Dendritic cell treated with granulocyte-macrophage colony-stimulating factor and Interleukin-4, amounts not matched to agents 40 ng/mL and 50 ng/mL, for 4 days (primary cell): ENCODE measurements at regions of chr10 and their contacts with region 1.

Region 1: GRCh38 chr10:119517235-119518141 is 25.0 kb downstream of the RGS10 start:
- H3K4me3 Mint-ChIP-seq: peak overlapping the region; percentile 52
- H3K27ac Mint-ChIP-seq: peak overlapping the region; percentile 77
- H3K4me1 Mint-ChIP-seq: peaks cover 67% of the 10 kb centered on the region
- H3K27me3 Mint-ChIP-seq: no peaks in the 10 kb centered on the region

Region 2: GRCh38 chr10:118792526-118792925 is 725.0 kb before region 1 on chr10:
- intact Hi-C with region 1: no loop called
- H3K4me3 Mint-ChIP-seq: peak overlapping the region; percentile 62
- H3K27ac Mint-ChIP-seq: peak overlapping the region; percentile 97
- H3K4me1 Mint-ChIP-seq: peaks cover 48% of the 10 kb centered on the region
- H3K27me3 Mint-ChIP-seq: no peaks in the 10 kb centered on the region

Region 3: GRCh38 chr10:119542988-119543813 is 25.7 kb after region 1 on chr10:
- intact Hi-C with region 1: loop called (anchors 1 kb)
- H3K4me3 Mint-ChIP-seq: peak overlapping the region; percentile 89
- H3K27ac Mint-ChIP-seq: peak overlapping the region; percentile 89
- H3K4me1 Mint-ChIP-seq: peaks cover 51% of the 10 kb centered on the region
- H3K27me3 Mint-ChIP-seq: peaks cover 18% of the 10 kb centered on the region

Region 4: DNA sequence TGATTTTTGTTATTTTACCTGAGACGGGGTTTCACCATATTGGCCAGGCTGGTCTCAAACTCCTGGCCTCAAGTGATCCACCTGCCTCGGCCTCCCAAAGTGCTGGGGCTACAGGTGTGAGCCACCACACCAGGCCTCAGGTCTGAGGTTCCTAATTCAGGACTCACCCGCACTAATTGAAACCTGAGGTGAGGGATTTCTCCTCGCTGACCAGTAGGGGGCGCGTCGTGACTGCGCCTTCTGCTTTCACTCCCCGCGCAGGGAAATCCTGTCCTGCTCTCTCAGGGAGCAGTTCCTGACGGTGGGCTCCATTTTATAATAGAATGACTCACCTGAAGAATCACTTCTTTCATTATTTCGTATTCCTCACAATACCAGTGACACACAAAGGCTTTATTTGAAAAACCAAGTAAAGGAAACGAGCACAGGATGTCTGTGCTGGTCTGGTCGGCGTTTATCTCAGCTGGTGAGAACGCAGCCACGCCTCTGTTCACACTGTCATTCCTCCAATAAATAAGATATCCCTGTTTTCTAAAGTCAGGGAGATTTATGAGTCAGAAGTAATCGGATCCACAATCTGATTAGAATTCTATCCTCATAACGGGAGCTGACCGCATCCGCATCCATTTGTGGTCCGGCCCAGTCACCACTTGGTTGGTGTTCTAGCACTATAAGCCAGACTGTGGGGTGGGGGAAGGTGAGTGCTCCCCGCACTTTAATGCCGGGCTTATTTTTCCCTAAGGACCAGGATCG is 169.1 kb after region 1 on chr10:
- intact Hi-C with region 1: no loop called
- H3K4me3 Mint-ChIP-seq: peak overlapping the region; percentile 30
- H3K27ac Mint-ChIP-seq: no peak overlapping the region
- H3K4me1 Mint-ChIP-seq: peaks cover 31% of the 10 kb centered on the region
- H3K27me3 Mint-ChIP-seq: peaks cover 22% of the 10 kb centered on the region

Region 5: DNA sequence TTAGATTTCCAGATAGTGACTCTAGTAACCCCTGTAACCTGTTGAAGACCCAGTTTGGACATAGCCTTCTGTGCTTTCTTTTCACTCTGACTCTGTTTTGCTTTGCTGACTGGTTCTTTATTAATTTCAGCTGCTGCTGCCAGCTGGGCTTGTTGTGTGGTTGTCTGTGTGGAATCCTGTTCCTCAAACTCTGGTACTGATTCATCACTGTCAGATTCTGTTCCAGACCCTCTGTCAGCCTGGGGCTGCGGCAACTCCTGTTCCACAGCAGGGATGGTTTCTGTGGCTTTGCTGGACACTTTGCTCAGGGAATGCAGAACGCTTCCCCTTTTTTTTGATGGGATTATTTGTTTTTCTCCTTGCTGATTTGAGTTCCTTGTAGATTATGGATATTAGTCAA is 479.9 kb after region 1 on chr10:
- intact Hi-C with region 1: no loop called
- H3K4me3 Mint-ChIP-seq: no peak overlapping the region
- H3K27ac Mint-ChIP-seq: no peak overlapping the region
- H3K4me1 Mint-ChIP-seq: no peaks in the 10 kb centered on the region
- H3K27me3 Mint-ChIP-seq: peaks cover 6% of the 10 kb centered on the region